SK-N-SH (cell line): ENCODE measurements at regions of chr7 and their contacts with region 1.

Region 1: DNA sequence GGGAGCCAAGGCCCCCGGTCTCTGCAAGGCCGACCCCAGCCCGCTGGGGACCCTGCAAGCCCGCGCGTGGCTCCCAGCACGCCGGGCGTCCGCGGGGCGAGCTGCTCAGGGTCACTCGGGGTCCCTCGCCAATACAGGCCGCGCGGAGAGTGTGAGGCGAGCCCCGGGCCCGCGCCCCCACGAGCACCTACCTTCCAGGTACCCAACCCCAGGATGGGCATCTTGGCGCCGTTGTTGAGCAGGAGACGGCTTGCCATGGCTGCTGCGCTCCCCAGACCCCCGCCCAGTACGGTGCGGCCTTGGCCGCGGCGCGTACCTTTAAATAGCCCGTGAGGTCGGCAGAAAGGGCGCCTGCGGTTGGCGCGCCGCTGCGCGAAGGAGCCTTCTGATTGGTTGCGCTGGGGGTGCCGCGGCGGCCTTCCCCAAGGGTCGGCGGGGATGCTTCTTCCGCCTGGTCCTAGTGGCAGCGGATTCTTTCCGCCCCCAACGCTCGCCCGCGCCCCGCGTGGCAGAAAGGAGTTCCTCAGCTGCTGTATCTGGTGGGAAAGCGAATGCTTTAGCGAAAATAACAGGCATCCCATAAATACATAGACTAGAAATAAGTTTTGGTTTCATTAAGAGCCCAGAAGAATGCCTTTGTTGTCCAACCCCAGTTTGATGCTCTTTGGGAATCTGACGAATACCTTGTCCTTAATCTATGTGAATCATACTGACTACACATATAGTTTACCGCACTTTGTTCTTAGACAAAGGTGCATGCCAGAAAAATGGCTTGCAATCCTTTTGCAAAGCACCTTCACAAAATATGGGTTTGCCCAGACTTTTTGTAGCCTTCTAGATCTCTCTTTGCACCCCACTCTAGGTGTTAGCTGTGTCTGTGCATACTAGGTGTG is at the start of gene AKR1B1:
- DNase-seq: peak; percentile 99
- H3K4me3 ChIP-seq: peak within 1 kb of the TSS; percentile 90 to 92
- H3K27ac ChIP-seq: peak within 1 kb of the TSS; percentile 62 to 77
- H3K4me1 ChIP-seq: peaks cover 5 to 11% of the 10 kb centered on the region in 2 experiments; a peak in 3 of 4 replicates
- H3K27me3 ChIP-seq: no peaks in the 10 kb centered on the region
- CTCF ChIP-seq: peak; percentile 80
- EP300 ChIP-seq: peak in 1 of 2 experiments; percentile 11; a peak in 1 of 4 replicates
- RAD21 ChIP-seq: no peak
- polyA plus RNA-seq, gene AKR1B1: 216 and 224 TPM in 2 replicates

Region 2: DNA sequence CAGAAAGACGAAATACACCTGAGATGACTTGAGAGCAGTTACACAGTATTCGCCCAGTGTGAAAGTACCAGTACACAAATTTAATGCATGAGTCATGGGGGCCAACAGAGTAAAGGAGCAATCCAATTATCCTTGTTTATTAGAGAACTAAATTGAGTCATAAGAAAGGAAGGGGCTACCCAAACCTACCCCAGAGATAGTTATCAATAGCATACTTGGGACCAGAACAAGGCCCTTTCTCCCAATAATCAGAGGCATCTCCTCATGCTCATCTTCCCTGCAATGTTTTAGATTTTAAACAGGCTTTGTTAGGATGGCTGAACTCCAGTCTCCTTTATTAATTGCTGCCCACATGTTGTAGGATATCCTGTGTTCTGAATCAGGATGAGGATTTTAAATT is 571.6 kb before region 1 on chr7:
- CTCF ChIA-PET with region 1: no interaction called
- POLR2A ChIA-PET with region 1: no interaction called
- DNase-seq: peak; percentile 29
- H3K4me3 ChIP-seq: no peak overlapping the region
- H3K27ac ChIP-seq: peak overlapping the region; percentile 3 to 91; a peak in 3 of 4 replicates
- H3K4me1 ChIP-seq: peaks cover 7 to 15% of the 10 kb centered on the region in 2 experiments; a peak in 3 of 4 replicates
- H3K27me3 ChIP-seq: no peaks in the 10 kb centered on the region
- CTCF ChIP-seq: no peak
- EP300 ChIP-seq: peak in 1 of 2 experiments; percentile 33; a peak in 1 of 4 replicates
- RAD21 ChIP-seq: no peak

Region 3: DNA sequence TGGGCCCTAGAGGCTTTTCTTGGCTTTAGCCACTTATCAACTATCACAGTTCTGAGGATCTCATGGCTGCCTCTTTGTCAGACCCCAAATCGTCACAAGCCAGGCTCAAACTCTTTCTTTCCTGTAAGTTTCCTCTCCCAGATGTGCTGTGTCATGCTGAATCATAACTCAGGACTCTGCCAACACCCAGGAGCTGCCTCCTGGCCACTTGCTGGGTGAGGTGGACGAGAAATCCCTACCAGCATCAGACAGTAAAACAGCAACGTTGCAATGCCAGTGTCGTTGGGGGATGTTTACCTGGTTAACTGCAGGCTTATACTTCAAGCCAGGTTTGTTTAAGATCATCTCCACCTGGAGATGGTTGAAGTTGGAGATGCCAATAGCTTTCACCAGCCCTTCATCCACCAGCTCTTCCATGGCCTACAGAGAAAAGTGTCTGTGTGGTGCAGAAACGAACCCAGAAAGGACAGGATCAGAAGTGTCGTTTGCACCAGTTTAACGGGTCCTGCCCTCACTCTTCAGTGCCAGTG is 10.3 kb before region 1 on chr7:
- CTCF ChIA-PET with region 1: interaction called, 49 read pairs
- POLR2A ChIA-PET with region 1: interaction called, 3 read pairs
- DNase-seq: no peak
- H3K4me3 ChIP-seq: no peak overlapping the region
- H3K27ac ChIP-seq: peak overlapping the region in 1 of 2 experiments; percentile 43; a peak in 2 of 4 replicates
- H3K4me1 ChIP-seq: peaks cover 11 to 19% of the 10 kb centered on the region in 2 experiments; a peak in 2 of 4 replicates
- H3K27me3 ChIP-seq: no peaks in the 10 kb centered on the region
- CTCF ChIP-seq: no peak
- EP300 ChIP-seq: no peak
- RAD21 ChIP-seq: no peak

Region 4: DNA sequence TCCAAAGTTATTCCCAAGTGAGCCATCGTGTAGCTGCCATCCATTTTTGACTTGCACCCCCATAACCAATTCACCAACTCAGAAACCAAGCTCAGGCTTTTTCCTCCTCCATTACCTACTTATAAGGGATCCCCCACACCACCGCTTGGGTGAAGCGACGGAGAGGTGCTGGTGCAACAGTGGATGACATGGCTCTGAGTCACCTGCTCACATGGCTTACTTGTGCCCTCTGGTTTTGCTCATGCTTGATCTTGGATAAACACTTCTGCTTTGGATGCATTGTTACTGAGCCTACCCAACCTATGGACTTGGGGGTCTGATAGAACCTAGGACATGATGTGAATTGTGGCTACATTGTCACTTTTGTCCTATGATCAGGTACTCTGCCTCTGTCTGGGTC is 11.8 kb after region 1 on chr7:
- CTCF ChIA-PET with region 1: interaction called, 14 read pairs
- POLR2A ChIA-PET with region 1: no interaction called
- DNase-seq: no peak
- H3K4me3 ChIP-seq: no peak overlapping the region
- H3K27ac ChIP-seq: no peak overlapping the region
- H3K4me1 ChIP-seq: no peaks in the 10 kb centered on the region
- H3K27me3 ChIP-seq: no peaks in the 10 kb centered on the region
- CTCF ChIP-seq: no peak
- EP300 ChIP-seq: no peak
- RAD21 ChIP-seq: no peak

Region 5: GRCh38 chr7:134480736-134481135 is 21.7 kb after region 1 on chr7:
- CTCF ChIA-PET with region 1: interaction called, 50 read pairs
- POLR2A ChIA-PET with region 1: interaction called, 3 read pairs
- DNase-seq: no peak
- H3K4me3 ChIP-seq: no peak overlapping the region
- H3K27ac ChIP-seq: no peak overlapping the region
- H3K4me1 ChIP-seq: peaks cover 0 to 7% of the 10 kb centered on the region in 2 experiments; a peak in 2 of 4 replicates
- H3K27me3 ChIP-seq: no peaks in the 10 kb centered on the region; the same call in 1 of the 2 replicates
- CTCF ChIP-seq: no peak
- EP300 ChIP-seq: no peak
- RAD21 ChIP-seq: no peak

Region 6: GRCh38 chr7:134502463-134503371 is 43.7 kb after region 1 on chr7:
- CTCF ChIA-PET with region 1: interaction called, 11 read pairs
- POLR2A ChIA-PET with region 1: no interaction called
- DNase-seq: no peak
- H3K4me3 ChIP-seq: no peak overlapping the region
- H3K27ac ChIP-seq: no peak overlapping the region
- H3K4me1 ChIP-seq: no peaks in the 10 kb centered on the region
- H3K27me3 ChIP-seq: peaks cover 5% of the 10 kb centered on the region; the same call in 1 of the 2 replicates
- CTCF ChIP-seq: no peak
- EP300 ChIP-seq: no peak
- RAD21 ChIP-seq: no peak

Region 7: DNA sequence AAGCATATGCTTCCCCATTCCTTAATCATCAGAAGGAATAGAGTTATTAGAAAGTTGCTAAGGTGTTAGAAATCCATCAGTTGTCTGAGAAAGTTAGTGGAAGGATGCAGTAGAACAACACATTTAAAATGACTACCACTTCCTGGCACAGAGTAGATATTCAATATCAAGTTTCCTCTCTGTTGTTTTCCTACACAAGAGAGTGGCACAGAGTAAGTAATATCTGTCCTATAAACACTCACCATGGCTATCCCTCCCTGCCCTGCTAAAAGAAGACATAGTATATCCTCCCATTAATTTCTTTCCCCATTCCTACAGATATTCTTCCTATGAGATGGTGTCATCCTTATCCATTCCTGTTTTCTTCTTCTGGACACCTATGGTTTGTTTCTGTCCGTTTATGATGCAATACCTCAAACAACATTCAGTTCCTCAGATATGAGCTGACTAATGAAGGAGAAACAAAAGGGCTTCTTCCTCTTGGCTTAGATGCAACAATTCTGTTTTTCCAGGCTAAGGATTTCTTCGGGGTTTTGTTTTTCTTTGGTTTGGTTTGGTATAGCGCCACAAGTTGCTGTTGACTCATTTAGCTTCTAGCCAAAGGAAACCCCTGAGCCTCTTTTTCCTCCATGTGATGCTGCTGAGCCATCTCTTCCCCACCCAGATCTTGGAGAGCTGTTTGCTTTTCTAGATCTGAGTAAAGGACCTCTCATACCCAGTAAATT is 154.7 kb after region 1 on chr7:
- CTCF ChIA-PET with region 1: interaction called, 10 read pairs
- POLR2A ChIA-PET with region 1: no interaction called
- DNase-seq: no peak
- H3K4me3 ChIP-seq: no peak overlapping the region; a peak in 1 of 4 replicates
- H3K27ac ChIP-seq: peak overlapping the region in 1 of 2 experiments; percentile 98; a peak in 2 of 4 replicates
- H3K4me1 ChIP-seq: peaks cover 0 to 21% of the 10 kb centered on the region in 2 experiments; a peak in 2 of 4 replicates
- H3K27me3 ChIP-seq: no peaks in the 10 kb centered on the region
- CTCF ChIP-seq: peak; percentile 26
- EP300 ChIP-seq: peak in 1 of 2 experiments; percentile 80; a peak in 2 of 4 replicates
- RAD21 ChIP-seq: no peak

Region 8: GRCh38 chr7:134710859-134711624 is 252.0 kb after region 1 on chr7:
- CTCF ChIA-PET with region 1: no interaction called
- POLR2A ChIA-PET with region 1: no interaction called
- DNase-seq: no peak
- H3K4me3 ChIP-seq: no peak overlapping the region
- H3K27ac ChIP-seq: no peak overlapping the region; a peak in 1 of 4 replicates
- H3K4me1 ChIP-seq: peaks cover 4 to 7% of the 10 kb centered on the region in 2 experiments; a peak in 1 of 4 replicates
- H3K27me3 ChIP-seq: no peaks in the 10 kb centered on the region
- CTCF ChIP-seq: no peak
- EP300 ChIP-seq: no peak
- RAD21 ChIP-seq: no peak